Prostate gland (tissue), 2 donors: ENCODE measurements at regions of chr12 and their contacts with region 1.

Region 1: GRCh38 chr12:130044991-130045621 is 117.2 kb upstream of the FZD10 start:
- DNase-seq: peak; percentile 66
- H3K4me3 ChIP-seq: no peak overlapping the region
- H3K27ac ChIP-seq: peak overlapping the region; percentile 67 to 68
- H3K4me1 ChIP-seq: peaks cover 12% of the 10 kb centered on the region
- H3K27me3 ChIP-seq: no peaks in the 10 kb centered on the region
- CTCF ChIP-seq: no peak
- POLR2A ChIP-seq: no peak

Region 2: DNA sequence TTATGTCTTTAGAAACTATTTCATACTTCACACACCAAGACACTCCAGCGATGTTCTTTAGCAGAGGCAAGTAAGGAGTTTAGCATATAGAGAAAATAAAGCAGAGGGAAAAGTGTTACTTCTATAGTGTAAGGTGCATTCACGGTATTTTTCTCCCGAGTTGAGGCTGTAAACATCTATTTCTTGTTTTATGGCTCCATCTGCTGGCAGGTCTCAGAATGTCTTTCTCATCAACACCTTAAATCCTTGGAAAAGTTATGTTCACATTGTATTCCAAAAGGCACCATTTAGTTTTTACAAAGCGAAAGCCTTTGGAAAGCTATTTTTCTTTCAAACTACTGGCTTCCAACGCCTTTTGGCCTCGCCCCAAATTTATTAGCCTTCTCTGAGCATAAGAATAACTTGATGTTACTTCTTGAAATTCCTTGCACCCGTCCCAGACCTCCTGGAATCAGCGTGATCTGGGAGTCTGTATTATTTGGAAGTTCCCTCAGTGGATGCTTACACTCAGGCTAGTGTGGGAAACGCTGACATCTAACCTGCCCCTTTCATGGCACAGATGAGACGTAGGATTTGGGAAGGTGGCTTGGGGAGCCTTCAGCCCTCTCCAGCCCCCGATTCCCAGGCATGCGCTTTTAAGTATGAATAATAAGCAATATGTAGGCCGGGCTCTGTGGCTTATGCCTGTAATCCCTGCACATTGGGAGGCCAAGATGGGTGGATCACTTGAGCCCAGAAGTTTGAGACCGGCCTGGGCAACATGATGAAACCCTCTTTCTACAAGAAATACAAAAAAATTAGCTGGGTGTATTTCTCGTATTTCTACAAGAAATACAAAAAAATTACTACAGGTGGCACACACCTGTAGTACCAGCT is 290.6 kb after region 1 on chr12:
- intact Hi-C with region 1: loop called (anchors 2 kb)
- DNase-seq: peak; percentile 67
- H3K4me3 ChIP-seq: no peak overlapping the region
- H3K27ac ChIP-seq: no peak overlapping the region
- H3K4me1 ChIP-seq: no peaks in the 10 kb centered on the region
- H3K27me3 ChIP-seq: peaks cover 5% of the 10 kb centered on the region
- CTCF ChIP-seq: peak; percentile 38 to 88 (median 77)
- POLR2A ChIP-seq: no peak

Region 3: DNA sequence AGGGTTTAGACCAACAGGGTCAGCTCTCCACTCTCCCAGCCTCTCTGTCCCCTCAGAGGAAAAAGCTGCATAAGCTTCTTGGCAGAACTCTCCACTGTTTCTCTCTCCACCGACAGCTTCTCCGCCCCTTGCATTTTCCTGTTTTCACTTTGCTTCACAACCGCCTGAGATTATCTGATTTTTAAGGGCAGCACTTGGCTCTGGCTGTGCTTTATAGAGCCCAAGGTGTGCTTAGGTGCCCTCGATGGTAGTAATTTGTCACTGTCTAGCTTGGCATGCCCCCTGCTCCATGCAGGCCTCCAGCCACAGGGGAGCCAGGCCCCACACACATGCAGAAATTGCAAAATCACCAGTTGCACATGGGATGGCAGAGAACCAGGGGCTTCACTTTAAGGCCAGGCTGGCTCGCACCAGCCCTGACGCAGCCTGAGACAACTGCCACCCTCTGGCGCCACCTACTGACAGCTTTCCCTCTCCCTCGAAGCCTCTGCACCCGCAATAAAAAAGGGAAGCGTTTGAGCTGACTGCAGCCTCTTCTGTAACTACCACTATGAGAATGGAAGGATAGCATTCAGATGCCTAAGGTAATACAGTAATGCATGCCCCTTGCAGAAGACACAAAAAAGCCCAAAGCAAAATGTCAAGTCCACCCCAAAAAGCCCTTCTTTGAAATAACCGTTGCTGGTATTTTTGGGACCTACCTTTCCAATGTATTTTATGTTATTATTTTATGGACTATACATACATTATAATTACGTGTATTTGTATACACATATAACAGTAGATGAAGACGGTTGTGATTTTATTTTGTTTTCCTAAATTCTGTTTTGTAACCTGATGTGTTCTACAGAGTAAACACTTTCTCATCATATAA is 703.0 kb after region 1 on chr12:
- intact Hi-C with region 1: loop called (anchors 5 kb)
- DNase-seq: peak; percentile 76
- H3K4me3 ChIP-seq: no peak overlapping the region
- H3K27ac ChIP-seq: no peak overlapping the region
- H3K4me1 ChIP-seq: no peaks in the 10 kb centered on the region
- H3K27me3 ChIP-seq: no peaks in the 10 kb centered on the region
- CTCF ChIP-seq: peak; percentile 65 to 80 (median 78)
- POLR2A ChIP-seq: no peak

Region 4: GRCh38 chr12:131311764-131312163 is 1266.7 kb after region 1 on chr12:
- intact Hi-C with region 1: no loop called
- DNase-seq: no peak
- H3K4me3 ChIP-seq: no peak overlapping the region
- H3K27ac ChIP-seq: no peak overlapping the region
- H3K4me1 ChIP-seq: no peaks in the 10 kb centered on the region
- H3K27me3 ChIP-seq: no peaks in the 10 kb centered on the region
- CTCF ChIP-seq: no peak
- POLR2A ChIP-seq: no peak